ENCODE measurements at regions of chr1 and their contacts with region 1.

Region 1: GRCh38 chr1:223700942-223701637 is 11.2 kb upstream of the CAPN2 start:
- DNase-seq: no peak

Region 2: DNA sequence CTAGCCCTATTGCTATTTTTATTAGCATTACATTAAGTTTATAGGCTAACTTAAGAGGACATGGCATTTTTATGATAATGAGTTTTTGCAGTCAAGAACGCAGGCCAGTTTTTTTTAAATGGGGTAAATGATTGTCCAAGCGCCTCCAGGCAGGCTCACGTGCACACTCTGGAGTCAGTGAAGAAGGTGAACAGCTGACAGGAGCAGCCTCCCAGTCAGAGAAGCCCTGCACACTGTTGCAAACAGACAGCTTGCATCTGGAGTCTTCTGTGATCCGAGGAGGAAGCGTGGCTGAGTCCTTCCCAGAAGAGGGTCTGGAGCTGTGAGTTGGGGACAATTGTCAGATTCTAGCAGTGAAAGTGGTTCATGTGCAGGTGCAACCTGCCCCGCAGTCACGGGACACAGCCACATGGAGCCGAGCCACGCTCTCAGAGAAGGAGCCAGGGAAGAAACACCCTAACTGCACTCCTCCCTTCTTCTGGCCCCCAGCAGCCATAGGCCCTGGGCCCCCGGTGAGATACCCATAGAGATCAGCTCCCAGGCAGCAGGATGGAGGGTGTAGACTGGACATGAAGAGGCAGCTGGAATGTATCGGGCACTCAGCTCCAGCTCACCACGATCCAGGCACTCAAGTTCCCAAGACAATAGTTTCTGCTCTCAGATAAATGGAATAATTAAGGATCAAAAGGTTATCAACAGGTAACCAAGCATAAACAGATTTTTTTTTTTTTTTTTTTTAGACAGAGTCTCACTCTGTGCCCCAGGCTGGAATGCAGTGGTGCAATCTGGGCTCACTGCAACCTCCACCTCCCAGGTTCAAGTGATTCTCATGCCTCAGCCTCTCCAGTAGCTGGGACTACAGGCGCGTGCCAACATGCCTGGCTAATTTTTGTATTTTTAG is 37.6 kb after region 1 on chr1:
- CTCF ChIA-PET with region 1: interaction called, 10 read pairs
- POLR2A ChIA-PET with region 1: no interaction called
- DNase-seq: peak; percentile 51